ENCODE measurements at regions of chrX and their contacts with region 1.

Region 1: GRCh38 chrX:318739-319578 is at the start of gene GTPBP6:
- DNase-seq: peak; percentile 99
- H3K4me3 Mint-ChIP-seq: peak within 1 kb of the TSS; percentile 91
- H3K27ac Mint-ChIP-seq: peak within 1 kb of the TSS; percentile 99
- H3K4me1 Mint-ChIP-seq: peaks cover 23% of the 10 kb centered on the region
- H3K27me3 Mint-ChIP-seq: no peaks in the 10 kb centered on the region
- total RNA-seq, gene GTPBP6: 60.0 to 62.4 TPM

Region 2: GRCh38 chrX:283115-283845 is 35.7 kb before region 1 on chrX:
- CTCF ChIA-PET with region 1: no interaction called
- POLR2A ChIA-PET with region 1: no interaction called
- intact Hi-C with region 1: loop called (anchors 1 kb)
- DNase-seq: peak; percentile 95
- H3K4me3 Mint-ChIP-seq: peak overlapping the region; percentile 86
- H3K27ac Mint-ChIP-seq: peak overlapping the region; percentile 87
- H3K4me1 Mint-ChIP-seq: peaks cover 22% of the 10 kb centered on the region
- H3K27me3 Mint-ChIP-seq: no peaks in the 10 kb centered on the region

Region 3: GRCh38 chrX:357693-358471 is 38.9 kb after region 1 on chrX:
- CTCF ChIA-PET with region 1: no interaction called
- POLR2A ChIA-PET with region 1: no interaction called
- intact Hi-C with region 1: loop called (anchors 1 kb)
- DNase-seq: peak; percentile 62
- H3K4me3 Mint-ChIP-seq: peak overlapping the region; percentile 13
- H3K27ac Mint-ChIP-seq: peak overlapping the region; percentile 91
- H3K4me1 Mint-ChIP-seq: peaks cover 19% of the 10 kb centered on the region
- H3K27me3 Mint-ChIP-seq: no peaks in the 10 kb centered on the region

Region 4: GRCh38 chrX:386768-387575 is 68.0 kb after region 1 on chrX and contains the start of gene PPP2R3B:
- CTCF ChIA-PET with region 1: no interaction called
- POLR2A ChIA-PET with region 1: no interaction called
- intact Hi-C with region 1: loop called (anchors 1 kb)
- DNase-seq: peak; percentile 99
- H3K4me3 Mint-ChIP-seq: peak within 1 kb of the TSS; percentile 90
- H3K27ac Mint-ChIP-seq: peak within 1 kb of the TSS; percentile 99
- H3K4me1 Mint-ChIP-seq: peaks cover 7% of the 10 kb centered on the region
- H3K27me3 Mint-ChIP-seq: peaks cover 3% of the 10 kb centered on the region
- total RNA-seq, gene PPP2R3B: 31.7 to 32.2 TPM

Region 5: DNA sequence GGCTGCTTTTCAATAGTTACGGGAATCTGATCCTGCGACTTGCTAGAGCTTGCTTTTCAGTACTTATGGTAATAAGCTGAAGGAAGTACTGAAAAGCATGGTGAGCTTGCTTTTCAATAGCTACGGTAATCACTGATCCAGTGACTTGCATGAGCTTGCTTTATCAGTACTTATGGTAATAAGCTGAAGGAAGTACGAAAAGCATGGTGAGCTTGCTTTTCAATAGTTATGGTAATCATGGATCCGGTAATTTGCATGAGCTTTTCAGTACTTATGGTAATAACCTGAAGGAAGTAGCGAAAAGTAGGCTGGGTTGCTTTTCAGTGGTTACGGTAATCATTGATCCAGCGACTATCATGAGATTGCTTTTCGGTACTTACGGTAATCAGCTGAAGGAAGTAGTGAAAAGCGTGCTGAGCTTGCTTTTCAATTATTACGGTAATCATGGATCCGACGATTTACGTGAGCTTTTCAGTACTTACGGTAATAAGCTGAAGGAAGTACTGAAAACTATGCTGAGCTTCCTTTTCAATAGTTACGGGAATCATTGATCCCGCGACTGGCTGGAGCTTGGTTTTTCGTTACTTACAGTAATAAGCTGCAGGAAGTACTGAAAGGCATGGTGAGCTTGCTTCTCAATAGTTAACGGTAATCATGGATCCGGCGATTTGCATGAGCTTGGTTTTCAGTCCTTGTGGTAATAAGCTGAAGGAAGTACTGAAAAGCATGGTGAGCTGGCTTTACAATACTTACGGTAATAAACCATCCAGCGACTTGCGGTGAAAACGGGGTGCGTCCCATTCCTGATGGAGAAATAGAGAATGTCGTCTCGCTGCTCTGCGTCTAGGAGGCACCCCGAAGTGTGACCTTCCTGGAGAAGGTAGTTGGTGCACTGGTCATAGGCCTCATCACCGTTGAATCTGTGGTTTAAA is 887.0 kb after region 1 on chrX:
- CTCF ChIA-PET with region 1: no interaction called
- POLR2A ChIA-PET with region 1: no interaction called
- intact Hi-C with region 1: loop called (anchors 2 kb)
- DNase-seq: peak; percentile 50
- H3K4me3 Mint-ChIP-seq: peak overlapping the region; percentile 62
- H3K27ac Mint-ChIP-seq: peak overlapping the region; percentile 30
- H3K4me1 Mint-ChIP-seq: peaks cover 34% of the 10 kb centered on the region
- H3K27me3 Mint-ChIP-seq: peaks cover 3% of the 10 kb centered on the region

Measured in activated CD4-positive, alpha-beta memory T cell treated with anti-CD3 and anti-CD28 coated beads for 36 hours (primary cell).